Activated B cell treated with CpG ODN at 0.5 μM for 24 hours (primary cell): ENCODE measurements at regions of chr7 and their contacts with region 1.

Region 1: DNA sequence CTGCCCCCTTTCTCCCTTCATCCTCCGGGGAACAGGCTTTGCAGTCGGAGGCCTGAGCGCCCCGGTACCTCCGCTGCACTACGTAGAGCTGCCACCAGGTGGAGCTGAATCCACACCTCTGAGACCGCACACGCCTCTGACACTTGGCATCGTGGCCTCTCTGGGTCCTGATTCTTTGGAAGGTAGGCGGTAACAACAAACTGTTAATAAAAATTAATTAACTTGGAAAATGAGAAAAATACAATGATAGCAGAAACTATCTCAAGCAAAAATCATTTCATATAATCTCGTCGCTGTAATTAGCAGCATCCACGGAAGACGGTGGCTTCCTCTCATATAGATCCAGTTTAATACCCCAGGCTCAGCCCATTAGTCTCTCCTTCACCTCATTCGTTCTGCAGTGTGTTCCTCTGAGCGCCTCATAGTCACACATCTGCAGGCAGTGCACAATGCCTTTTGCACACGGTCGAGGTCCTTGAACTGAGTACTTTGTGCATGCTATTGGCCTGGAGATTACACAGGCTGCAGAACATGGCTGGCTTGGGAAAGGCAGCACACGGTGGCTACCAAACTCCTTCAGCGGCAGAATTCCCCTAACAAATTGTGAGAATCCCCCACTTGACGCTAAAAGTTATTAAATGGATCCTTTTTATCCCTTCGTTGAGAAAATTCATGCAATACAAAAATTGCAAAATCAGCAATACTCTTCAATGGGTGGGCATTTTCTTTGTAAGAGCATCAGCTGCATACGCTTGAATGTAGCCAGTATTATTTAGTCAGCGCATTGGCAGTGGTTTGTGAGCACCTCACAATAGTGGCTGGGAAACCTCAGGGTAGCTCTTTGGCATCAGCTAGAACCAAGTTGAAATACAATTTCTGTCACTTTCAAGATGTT is 18.7 kb downstream of the OR9A2 start:
- DNase-seq: peak; percentile 81
- ATAC-seq: peak; percentile 97
- H3K4me3 Mint-ChIP-seq: no peak overlapping the region
- H3K27ac Mint-ChIP-seq: no peak overlapping the region
- H3K4me1 Mint-ChIP-seq: peaks cover 50% of the 10 kb centered on the region
- H3K27me3 Mint-ChIP-seq: peaks cover 1% of the 10 kb centered on the region
- CTCF ChIP-seq: peak; percentile 98

Region 2: DNA sequence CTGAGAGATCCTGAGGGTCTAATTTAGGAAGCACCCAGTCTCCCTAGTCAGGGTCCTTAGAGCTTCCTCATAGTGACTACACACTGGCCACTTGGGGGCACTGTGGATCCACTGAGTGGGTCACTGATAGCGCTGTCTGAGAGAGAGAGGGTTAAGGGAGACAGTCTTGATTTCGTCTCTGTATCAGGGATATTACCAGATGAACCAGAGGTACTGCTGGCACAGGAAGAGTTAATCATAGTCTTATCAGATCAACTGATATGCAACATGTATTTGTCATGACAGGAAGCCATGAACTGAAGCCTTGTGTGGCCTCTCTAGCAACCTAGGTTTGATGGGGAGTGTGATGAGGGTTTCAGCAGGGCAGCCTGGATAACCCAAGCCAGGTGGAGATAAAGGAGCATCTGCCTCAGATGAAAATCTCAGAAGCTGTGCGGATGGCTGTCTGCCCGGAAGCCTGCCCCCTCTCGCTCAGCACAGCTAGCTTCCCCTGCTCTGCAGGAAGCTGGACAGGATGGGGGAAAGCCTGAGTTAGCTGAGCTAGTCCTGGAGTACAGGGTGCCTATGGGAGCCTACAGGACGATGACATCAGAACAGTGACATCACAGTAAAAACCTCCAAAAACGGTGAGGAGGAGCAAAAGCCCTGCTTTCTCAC is 473.0 kb before region 1 on chr7:
- CTCF ChIA-PET with region 1: interaction called, 4 read pairs
- POLR2A ChIA-PET with region 1: no interaction called
- intact Hi-C with region 1: loop called (anchors 1 kb)
- DNase-seq: no peak
- ATAC-seq: peak; percentile 80
- H3K4me3 Mint-ChIP-seq: peak overlapping the region; percentile 33
- H3K27ac Mint-ChIP-seq: no peak overlapping the region
- H3K4me1 Mint-ChIP-seq: peaks cover 12% of the 10 kb centered on the region
- H3K27me3 Mint-ChIP-seq: peaks cover 4% of the 10 kb centered on the region
- CTCF ChIP-seq: no peak

Region 3: DNA sequence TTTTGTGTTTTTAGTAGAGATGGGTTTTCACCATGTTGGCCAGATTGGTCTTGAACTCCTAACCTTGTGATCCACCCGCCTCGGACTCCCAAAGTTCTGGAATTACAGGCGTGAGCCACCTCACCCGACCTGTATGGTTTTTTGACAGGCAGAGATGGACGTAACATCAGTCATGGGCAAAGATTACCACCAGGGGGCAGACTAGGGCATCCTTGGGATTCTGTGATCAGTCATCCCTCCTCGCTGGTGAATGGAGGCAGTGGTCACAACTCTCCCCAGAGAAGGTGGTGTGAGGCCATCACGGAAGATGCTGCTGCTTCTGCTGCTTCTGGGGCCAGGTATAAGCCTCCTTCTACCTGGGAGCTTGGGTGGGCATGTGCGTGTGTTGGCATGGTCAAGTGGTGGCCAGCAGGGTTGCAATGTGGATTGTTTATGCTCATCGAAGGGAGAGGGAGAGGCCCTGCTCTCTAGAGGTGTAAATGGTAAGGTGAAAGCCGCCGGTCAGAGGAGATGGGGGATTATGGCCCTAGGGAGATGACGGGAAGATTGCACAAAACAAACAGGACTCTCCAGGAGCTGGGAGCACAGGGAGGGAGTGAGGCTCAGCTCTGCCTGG is 381.7 kb before region 1 on chr7:
- CTCF ChIA-PET with region 1: interaction called, 85 read pairs
- POLR2A ChIA-PET with region 1: no interaction called
- intact Hi-C with region 1: no loop called
- DNase-seq: no peak
- ATAC-seq: peak; percentile 62
- H3K4me3 Mint-ChIP-seq: no peak overlapping the region
- H3K27ac Mint-ChIP-seq: no peak overlapping the region
- H3K4me1 Mint-ChIP-seq: peaks cover 3% of the 10 kb centered on the region
- H3K27me3 Mint-ChIP-seq: peaks cover 24% of the 10 kb centered on the region
- CTCF ChIP-seq: no peak

Region 4: DNA sequence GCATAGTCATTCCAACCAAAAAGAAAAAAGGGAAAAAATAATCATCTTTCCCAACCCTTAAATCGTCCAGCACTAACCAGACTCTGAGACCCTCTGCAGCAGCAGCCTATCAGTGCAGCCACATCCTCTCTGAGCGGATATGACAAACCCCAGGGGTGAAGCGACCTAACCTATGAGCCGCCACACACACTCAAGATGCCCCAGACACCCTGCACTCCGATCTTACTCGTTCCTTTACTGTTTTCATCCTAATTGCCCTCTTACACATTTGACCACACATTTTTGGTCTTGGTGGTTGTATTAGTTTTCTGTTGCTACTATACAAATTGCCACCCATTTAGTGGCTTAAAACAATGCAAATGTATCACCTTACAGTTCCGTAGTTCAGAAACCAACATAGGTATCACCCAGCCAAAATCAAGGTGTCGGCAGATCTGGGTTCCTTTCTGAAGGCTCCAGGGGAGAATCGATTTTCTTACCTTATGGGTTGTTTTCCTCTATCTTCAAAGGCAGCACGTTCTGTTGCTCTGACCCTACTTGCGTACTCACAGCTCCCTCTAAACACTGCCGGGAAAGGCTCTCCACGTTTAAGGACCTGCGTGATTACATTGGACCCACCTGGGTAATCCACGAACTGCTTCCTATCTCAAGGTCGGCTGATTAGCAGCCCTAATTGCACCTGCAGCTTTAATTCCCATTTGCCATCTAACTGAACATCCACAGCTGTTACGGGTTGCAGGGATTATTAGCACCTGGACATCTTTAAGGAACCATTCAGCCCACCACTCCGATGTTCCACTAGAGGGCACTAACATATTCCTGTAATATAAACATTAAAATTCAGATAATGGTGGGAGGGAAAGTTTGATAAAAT is 296.3 kb before region 1 on chr7:
- CTCF ChIA-PET with region 1: interaction called, 3 read pairs
- POLR2A ChIA-PET with region 1: no interaction called
- intact Hi-C with region 1: loop called (anchors 2 kb)
- DNase-seq: no peak
- ATAC-seq: peak; percentile 25
- H3K4me3 Mint-ChIP-seq: peak overlapping the region; percentile 63
- H3K27ac Mint-ChIP-seq: no peak overlapping the region
- H3K4me1 Mint-ChIP-seq: peaks cover 27% of the 10 kb centered on the region
- H3K27me3 Mint-ChIP-seq: no peaks in the 10 kb centered on the region
- CTCF ChIP-seq: no peak

Region 5: DNA sequence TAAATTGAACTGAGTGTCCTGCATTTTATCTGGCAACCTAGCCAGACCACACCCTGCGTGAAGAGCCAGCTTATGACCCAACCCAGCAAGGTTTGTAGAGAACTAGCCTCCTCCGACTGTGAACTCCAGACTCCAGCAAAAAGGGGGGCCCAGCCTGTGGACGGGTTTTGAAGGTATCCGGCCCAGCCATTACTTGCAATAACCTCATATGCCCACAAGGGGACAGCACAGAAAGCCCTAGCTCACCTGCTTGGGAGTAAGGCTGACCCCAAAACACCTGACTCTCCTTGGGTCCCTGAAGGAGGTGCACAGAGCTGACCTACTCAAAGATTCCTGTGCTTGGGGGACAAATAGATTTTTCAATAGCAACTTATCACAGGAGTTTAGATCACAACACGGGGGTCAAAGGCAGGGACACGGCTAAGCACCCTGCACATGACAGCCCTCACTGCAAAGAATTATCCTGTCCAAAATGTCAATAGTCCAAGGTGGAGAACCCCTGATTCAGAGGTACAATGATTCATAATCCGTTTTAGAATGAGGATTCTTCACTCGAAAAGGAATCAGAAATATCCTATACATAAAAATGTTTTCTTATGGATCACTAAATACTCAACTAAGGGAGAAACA is 127.3 kb before region 1 on chr7:
- CTCF ChIA-PET with region 1: interaction called, 14 read pairs
- POLR2A ChIA-PET with region 1: no interaction called
- intact Hi-C with region 1: loop called (anchors 1 kb)
- DNase-seq: no peak
- ATAC-seq: peak; percentile 79
- H3K4me3 Mint-ChIP-seq: no peak overlapping the region
- H3K27ac Mint-ChIP-seq: no peak overlapping the region
- H3K4me1 Mint-ChIP-seq: no peaks in the 10 kb centered on the region
- H3K27me3 Mint-ChIP-seq: peaks cover 15% of the 10 kb centered on the region
- CTCF ChIP-seq: peak; percentile 43

Region 6: DNA sequence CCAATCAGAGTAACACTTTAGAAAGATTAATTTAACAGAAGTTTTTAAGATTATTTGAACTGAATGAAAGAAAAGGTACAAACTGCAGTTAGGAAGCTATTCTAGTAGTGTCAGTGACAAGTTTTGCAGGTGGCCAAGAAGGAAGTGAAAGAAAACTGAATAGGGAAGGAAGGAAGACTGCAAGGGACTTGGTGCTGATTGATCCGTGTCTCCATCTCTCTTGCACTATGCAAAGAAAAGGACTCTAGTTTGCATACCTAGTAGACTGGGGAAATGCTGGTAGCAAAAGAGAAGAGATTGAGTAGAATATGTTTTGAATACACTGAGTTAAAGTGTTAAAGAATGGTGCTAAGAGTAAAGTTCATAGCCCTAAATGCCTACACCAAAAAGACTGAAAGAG is 76.9 kb after region 1 on chr7:
- CTCF ChIA-PET with region 1: interaction called, 12 read pairs
- POLR2A ChIA-PET with region 1: interaction called, 4 read pairs
- intact Hi-C with region 1: no loop called
- DNase-seq: no peak
- ATAC-seq: peak; percentile 98
- H3K4me3 Mint-ChIP-seq: peak overlapping the region; percentile 67
- H3K27ac Mint-ChIP-seq: peak overlapping the region; percentile 88
- H3K4me1 Mint-ChIP-seq: peaks cover 68% of the 10 kb centered on the region
- H3K27me3 Mint-ChIP-seq: no peaks in the 10 kb centered on the region
- CTCF ChIP-seq: no peak